BJ (cell line): ENCODE measurements at regions of chr6 and their contacts with region 1.

Region 1: DNA sequence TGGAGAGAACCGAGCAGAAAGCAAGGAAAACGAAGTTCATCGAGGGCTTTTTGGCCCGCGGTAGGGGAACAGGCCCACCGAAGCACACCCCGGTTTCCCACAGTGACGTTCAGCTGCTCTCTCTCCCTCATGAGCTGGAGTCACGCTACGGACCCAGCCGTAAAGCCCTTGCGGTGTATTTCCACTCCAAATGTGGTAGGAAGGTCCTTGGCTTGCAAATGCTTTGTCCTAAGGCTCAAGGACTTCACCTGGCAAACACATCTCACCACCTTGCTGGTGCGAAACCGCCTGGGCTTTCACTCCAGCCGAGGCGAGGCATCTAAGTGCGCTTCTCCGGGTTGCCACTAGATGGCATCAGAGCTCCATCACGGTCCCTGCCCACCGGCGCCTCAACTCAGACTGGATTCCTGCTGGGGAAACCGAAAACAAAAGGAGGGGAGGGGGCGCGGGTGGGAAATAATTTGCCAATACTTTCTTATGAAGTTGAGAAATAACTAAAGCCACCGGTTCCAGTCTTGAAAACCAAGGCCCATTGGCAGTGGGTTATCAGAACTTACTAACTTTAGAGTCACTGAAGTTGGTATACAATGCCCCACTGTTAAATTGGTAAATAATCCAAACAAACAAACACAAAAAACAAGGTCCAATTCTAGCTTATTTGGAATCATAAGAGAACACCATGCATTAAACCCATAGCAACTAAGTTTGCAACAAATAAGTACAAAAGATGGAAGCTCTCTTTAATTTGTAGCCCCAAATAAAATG is 13.4 kb upstream of the FOXC1 start:
- DNase-seq: no peak
- H3K4me3 ChIP-seq: peak overlapping the region; percentile 36
- H3K27me3 ChIP-seq: peaks cover 4% of the 10 kb centered on the region; the same call in 1 of the 2 replicates
- CTCF ChIP-seq: peak; percentile 93

Region 2: GRCh38 chr6:1609648-1610496 is 13.6 kb after region 1 on chr6 and contains the start of gene FOXC1:
- CTCF ChIA-PET with region 1: interaction called, 12 read pairs
- POLR2A ChIA-PET with region 1: no interaction called
- DNase-seq: peak; percentile 80
- H3K4me3 ChIP-seq: peak within 1 kb of the TSS; percentile 87
- H3K27me3 ChIP-seq: peaks cover 35% of the 10 kb centered on the region
- CTCF ChIP-seq: no peak
- polyA plus RNA-seq, gene FOXC1: 7.6 and 7.8 TPM in 2 replicates

Region 3: DNA sequence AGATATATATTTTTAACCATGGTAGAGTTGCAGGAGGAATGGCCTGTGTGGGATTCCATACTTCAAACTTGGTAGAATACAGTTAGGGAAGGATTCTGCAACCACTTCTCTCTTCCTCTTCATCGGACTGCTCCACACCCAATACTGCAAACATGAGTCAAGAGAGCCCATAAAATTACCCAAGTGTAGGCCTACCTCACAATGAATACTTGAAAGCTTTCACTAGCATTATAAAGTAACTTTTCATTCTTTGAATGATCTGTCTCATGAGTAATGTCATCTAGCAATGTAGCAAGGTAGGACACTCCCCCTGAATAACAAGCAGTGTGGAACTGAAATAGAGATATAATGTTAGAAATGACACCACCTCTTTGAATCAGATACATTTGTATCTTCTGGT is 92.9 kb after region 1 on chr6:
- CTCF ChIA-PET with region 1: no interaction called
- POLR2A ChIA-PET with region 1: no interaction called
- DNase-seq: peak; percentile 31
- H3K4me3 ChIP-seq: no peak overlapping the region
- H3K27me3 ChIP-seq: no peaks in the 10 kb centered on the region
- CTCF ChIP-seq: no peak

Region 4: DNA sequence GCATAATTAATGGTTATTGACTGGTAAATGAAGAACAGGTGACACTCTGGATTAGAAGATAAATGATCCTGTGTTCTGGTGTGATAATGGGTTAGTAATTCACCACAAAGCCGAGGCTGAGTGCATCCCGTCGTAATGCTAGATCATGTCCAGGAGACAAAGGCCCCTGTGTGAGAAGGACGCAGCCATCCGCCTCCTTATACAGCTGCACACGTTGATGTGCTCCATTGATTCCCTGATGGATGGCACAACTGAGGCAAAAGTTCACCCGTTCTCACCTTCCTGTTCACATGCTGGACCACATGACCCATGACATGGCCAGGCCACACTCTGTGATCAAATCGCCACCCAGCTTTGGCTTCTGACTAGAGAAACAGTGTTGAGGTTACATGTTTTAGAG is 149.5 kb after region 1 on chr6:
- CTCF ChIA-PET with region 1: no interaction called
- POLR2A ChIA-PET with region 1: no interaction called
- DNase-seq: no peak
- H3K4me3 ChIP-seq: no peak overlapping the region
- H3K27me3 ChIP-seq: no peaks in the 10 kb centered on the region
- CTCF ChIP-seq: no peak

Region 5: DNA sequence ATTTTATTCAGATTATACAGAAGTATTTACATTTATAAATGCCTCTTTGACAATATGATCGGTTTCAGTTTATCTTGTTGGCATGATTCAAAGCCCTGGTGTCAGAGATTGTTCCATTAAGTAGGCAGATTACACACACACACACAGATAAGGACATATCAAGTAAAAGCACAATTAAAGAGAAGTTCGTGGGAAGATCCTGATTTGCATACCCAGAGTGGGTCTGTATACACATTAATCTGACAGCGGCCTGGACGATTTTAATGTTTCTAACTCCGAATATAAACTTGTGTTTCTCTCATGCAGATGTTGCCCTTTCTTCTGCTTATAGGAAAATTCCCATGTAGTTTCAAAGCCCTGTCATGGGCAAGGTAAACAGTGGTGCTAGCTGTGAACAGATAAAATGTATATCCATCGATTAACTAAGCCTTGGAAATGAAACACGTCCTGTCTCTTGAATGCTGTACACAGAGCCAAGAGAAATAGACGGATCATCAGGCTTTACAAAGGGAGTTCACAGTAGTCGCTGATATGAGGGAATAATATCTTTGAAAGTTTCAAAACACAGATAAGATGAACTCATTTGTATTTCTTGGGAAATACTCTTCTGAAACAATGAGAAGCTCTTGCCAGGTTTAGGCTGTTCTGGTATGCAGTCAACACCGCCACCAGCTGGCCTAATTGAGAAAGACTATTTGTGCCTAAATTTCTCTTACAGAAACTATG is 757.3 kb after region 1 on chr6:
- CTCF ChIA-PET with region 1: interaction called, 23 read pairs
- POLR2A ChIA-PET with region 1: no interaction called
- DNase-seq: peak; percentile 23
- H3K4me3 ChIP-seq: no peak overlapping the region
- H3K27me3 ChIP-seq: no peaks in the 10 kb centered on the region
- CTCF ChIP-seq: peak; percentile 72

Region 6: DNA sequence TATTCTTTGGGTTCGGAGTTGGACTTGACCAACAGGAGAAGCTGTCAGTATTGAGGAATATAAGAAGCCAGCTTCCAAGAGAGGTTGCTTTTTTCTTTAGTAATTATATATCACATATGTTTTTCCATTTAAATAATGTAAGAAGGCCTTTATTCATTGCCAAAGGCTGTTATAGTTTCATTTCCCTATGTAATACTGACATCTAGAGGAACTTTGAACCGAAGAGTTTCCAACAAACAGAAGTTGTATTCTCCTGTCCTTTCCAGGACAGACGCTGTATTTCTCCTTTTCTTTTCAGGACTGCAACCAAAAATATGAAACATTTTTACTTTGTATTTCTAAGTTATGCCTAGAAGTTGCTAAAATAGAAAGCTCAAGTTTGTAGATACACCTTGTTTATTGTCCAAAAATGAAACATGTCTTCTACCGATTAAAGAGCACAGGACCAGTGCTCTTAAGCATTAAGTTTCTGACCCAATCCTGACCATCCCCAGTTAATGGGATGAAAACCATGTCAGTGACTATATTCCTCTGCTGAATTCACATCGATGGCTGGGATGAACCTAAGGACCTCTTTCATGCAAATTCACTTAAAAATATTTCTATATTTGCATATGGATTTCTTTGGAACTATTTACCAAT is 1099.3 kb after region 1 on chr6:
- CTCF ChIA-PET with region 1: interaction called, 14 read pairs
- POLR2A ChIA-PET with region 1: no interaction called
- DNase-seq: no peak
- H3K4me3 ChIP-seq: no peak overlapping the region
- H3K27me3 ChIP-seq: no peaks in the 10 kb centered on the region
- CTCF ChIP-seq: peak; percentile 31; the same call in 1 of the 2 replicates

Region 7: DNA sequence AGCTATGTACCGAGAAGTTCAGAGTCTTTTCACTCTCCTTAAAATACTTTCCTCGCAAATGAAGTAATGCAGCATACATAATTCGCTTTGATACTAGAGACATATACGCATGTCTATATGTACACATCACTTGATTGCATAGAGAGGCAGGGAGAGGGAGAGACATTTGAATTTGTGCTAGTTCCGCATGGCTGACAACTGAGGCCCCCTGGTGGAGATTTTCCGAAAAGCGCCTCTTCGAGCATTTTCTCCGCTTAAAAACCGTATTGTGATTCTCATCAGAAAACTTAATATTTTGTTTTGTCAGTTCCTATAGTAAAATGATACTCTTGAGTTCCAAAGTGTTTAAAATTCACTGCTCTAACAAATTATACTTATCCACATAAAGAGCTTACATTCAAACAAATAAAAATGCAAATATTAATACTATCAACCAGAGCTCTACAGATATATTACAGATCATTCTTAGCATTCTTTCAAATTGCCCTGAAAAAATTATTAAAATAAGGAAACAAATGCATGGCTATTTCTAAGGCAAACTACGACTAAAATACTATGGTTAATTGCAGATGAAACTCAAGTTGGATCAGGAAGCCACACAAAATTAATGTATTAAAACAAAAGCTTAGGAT is 1153.8 kb after region 1 on chr6:
- CTCF ChIA-PET with region 1: interaction called, 92 read pairs
- POLR2A ChIA-PET with region 1: no interaction called
- DNase-seq: no peak
- H3K4me3 ChIP-seq: no peak overlapping the region
- H3K27me3 ChIP-seq: no peaks in the 10 kb centered on the region
- CTCF ChIP-seq: peak; percentile 86